Naive thymus-derived CD4-positive, alpha-beta T cell (primary cell): ENCODE measurements at regions of chr9 and their contacts with region 1.

Region 1: DNA sequence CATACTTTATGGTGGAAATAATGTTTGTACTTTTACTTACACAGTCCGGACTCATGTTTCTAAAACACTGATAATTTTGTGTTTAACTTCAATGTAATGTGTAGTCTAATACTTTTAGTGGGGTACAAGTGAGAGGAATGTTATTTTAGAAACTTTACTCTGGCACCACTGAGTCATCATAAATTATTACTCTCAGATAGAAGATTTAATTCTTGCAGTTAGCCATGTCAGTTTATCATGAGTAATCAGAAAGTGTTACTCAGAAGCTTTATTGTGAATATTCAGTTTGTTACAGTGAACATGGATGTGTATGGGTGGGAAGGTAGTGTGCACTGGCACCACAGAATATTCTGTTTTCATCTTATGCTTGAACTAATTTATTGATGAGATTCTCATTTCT is 20.0 kb downstream of the OGN start:
- DNase-seq: no peak
- ATAC-seq: no peak
- H3K4me3 ChIP-seq: no peak overlapping the region
- H3K4me3 Mint-ChIP-seq: no peak overlapping the region
- H3K27ac ChIP-seq: no peak overlapping the region
- H3K27ac Mint-ChIP-seq: no peak overlapping the region
- H3K4me1 ChIP-seq: peaks cover 0 to 2% of the 10 kb centered on the region in 2 donors
- H3K4me1 Mint-ChIP-seq: peaks cover 1 to 5% (median 4%) of the 10 kb centered on the region in 7 donors
- H3K27me3 ChIP-seq: no peaks in the 10 kb centered on the region
- H3K27me3 Mint-ChIP-seq: no peaks in the 10 kb centered on the region

Region 2: DNA sequence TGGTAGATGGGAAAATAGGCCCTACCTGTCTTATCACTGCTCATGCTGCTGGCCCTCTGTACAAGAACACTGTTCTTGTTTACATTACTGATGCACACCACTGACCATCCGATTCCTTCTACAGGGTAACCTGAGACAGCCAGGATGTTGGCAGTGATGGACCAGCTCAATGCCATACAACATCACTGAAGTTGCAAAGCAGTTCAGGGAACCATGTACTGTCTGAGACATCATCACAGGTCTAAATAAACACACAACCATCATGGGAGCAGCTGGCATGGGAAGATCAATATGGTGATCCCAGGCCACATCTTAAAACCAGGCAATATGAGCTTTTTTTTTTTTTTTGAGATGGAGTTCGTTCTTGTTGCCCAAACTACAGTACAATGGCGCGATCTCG is 149.9 kb before region 1 on chr9:
- CTCF ChIA-PET with region 1: no interaction called
- POLR2A ChIA-PET with region 1: no interaction called
- intact Hi-C with region 1: no loop called
- DNase-seq: no peak
- ATAC-seq: no peak
- H3K4me3 ChIP-seq: no peak overlapping the region
- H3K4me3 Mint-ChIP-seq: no peak overlapping the region
- H3K27ac ChIP-seq: no peak overlapping the region
- H3K27ac Mint-ChIP-seq: no peak overlapping the region
- H3K4me1 ChIP-seq: no peaks in the 10 kb centered on the region
- H3K4me1 Mint-ChIP-seq: peaks cover 0 to 2% (median 0%) of the 10 kb centered on the region in 7 donors
- H3K27me3 ChIP-seq: no peaks in the 10 kb centered on the region
- H3K27me3 Mint-ChIP-seq: no peaks in the 10 kb centered on the region

Region 3: GRCh38 chr9:92435263-92435662 is 50.9 kb after region 1 on chr9:
- CTCF ChIA-PET with region 1: no interaction called
- POLR2A ChIA-PET with region 1: no interaction called
- intact Hi-C with region 1: no loop called
- DNase-seq: no peak
- ATAC-seq: no peak
- H3K4me3 ChIP-seq: no peak overlapping the region
- H3K4me3 Mint-ChIP-seq: no peak overlapping the region
- H3K27ac ChIP-seq: no peak overlapping the region
- H3K27ac Mint-ChIP-seq: no peak overlapping the region
- H3K4me1 ChIP-seq: peaks cover 0 to 5% of the 10 kb centered on the region in 2 donors
- H3K4me1 Mint-ChIP-seq: peaks cover 0 to 6% (median 0%) of the 10 kb centered on the region in 7 donors
- H3K27me3 ChIP-seq: no peaks in the 10 kb centered on the region
- H3K27me3 Mint-ChIP-seq: no peaks in the 10 kb centered on the region

Region 4: GRCh38 chr9:92481040-92481633 is 96.8 kb after region 1 on chr9:
- CTCF ChIA-PET with region 1: no interaction called
- POLR2A ChIA-PET with region 1: no interaction called
- intact Hi-C with region 1: no loop called
- DNase-seq: no peak
- ATAC-seq: no peak
- H3K4me3 ChIP-seq: no peak overlapping the region
- H3K4me3 Mint-ChIP-seq: no peak overlapping the region
- H3K27ac ChIP-seq: no peak overlapping the region
- H3K27ac Mint-ChIP-seq: no peak overlapping the region
- H3K4me1 ChIP-seq: no peaks in the 10 kb centered on the region
- H3K4me1 Mint-ChIP-seq: peaks cover 0 to 5% (median 0%) of the 10 kb centered on the region in 7 donors
- H3K27me3 ChIP-seq: no peaks in the 10 kb centered on the region
- H3K27me3 Mint-ChIP-seq: no peaks in the 10 kb centered on the region

Region 5: DNA sequence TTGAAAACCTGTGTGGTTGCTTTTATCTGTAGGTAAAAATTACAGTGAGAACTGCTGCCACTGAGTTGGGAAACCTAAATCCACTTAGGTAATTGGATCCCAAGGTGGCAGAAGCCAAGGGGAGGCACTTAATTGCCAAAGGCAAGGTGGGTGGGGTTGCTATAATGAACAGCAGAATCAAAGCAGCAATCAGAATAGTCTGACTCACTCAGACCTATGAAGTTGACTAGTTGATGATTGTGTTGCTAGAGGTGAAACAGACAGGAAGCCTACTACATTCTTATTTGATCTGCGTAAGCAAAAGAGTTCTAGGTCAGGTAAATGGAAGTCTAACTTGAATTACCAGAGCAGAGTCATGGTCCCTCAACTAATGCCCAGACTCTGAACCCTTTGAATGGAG is 397.5 kb after region 1 on chr9:
- CTCF ChIA-PET with region 1: no interaction called
- POLR2A ChIA-PET with region 1: no interaction called
- intact Hi-C with region 1: no loop called
- DNase-seq: peak in 1 of 9 donors; percentile 41
- ATAC-seq: peak; percentile 57
- H3K4me3 ChIP-seq: no peak overlapping the region
- H3K4me3 Mint-ChIP-seq: peak overlapping the region in 1 of 10 donors; percentile 26
- H3K27ac ChIP-seq: no peak overlapping the region
- H3K27ac Mint-ChIP-seq: peak overlapping the region in 7 of 9 donors; percentile 38 to 80 (median 74)
- H3K4me1 ChIP-seq: no peaks in the 10 kb centered on the region
- H3K4me1 Mint-ChIP-seq: peaks cover 0 to 11% (median 8%) of the 10 kb centered on the region in 7 donors
- H3K27me3 ChIP-seq: no peaks in the 10 kb centered on the region
- H3K27me3 Mint-ChIP-seq: peaks cover 0 to 10% (median 0%) of the 10 kb centered on the region in 5 donors

Region 6: GRCh38 chr9:93520523-93520922 is 1136.1 kb after region 1 on chr9:
- CTCF ChIA-PET with region 1: interaction called, 10 read pairs
- POLR2A ChIA-PET with region 1: no interaction called
- intact Hi-C with region 1: no loop called
- DNase-seq: no peak
- ATAC-seq: peak; percentile 51
- H3K4me3 ChIP-seq: no peak overlapping the region
- H3K4me3 Mint-ChIP-seq: peak overlapping the region in 1 of 10 donors; percentile 60
- H3K27ac ChIP-seq: no peak overlapping the region
- H3K27ac Mint-ChIP-seq: peak overlapping the region in 4 of 9 donors; percentile 9 to 62 (median 42)
- H3K4me1 ChIP-seq: no peaks in the 10 kb centered on the region
- H3K4me1 Mint-ChIP-seq: peaks cover 11 to 29% (median 26%) of the 10 kb centered on the region in 7 donors
- H3K27me3 ChIP-seq: no peaks in the 10 kb centered on the region
- H3K27me3 Mint-ChIP-seq: no peaks in the 10 kb centered on the region